Activated CD8-positive, alpha-beta T cell treated with anti-CD3 and anti-CD28 coated beads for 36 hours (primary cell): ENCODE measurements at regions of chr1 and their contacts with region 1.

Region 1: GRCh38 chr1:196063293-196063692 is 544.9 kb downstream of the KCNT2 start:
- DNase-seq: no peak
- ATAC-seq: no peak
- H3K4me3 Mint-ChIP-seq: no peak overlapping the region
- H3K27ac Mint-ChIP-seq: no peak overlapping the region
- H3K4me1 Mint-ChIP-seq: no peaks in the 10 kb centered on the region
- H3K27me3 Mint-ChIP-seq: no peaks in the 10 kb centered on the region
- CTCF ChIP-seq: no peak

Region 2: GRCh38 chr1:195804547-195804946 is 258.7 kb before region 1 on chr1:
- CTCF ChIA-PET with region 1: no interaction called
- POLR2A ChIA-PET with region 1: no interaction called
- intact Hi-C with region 1: no loop called
- DNase-seq: no peak
- ATAC-seq: no peak
- H3K4me3 Mint-ChIP-seq: no peak overlapping the region
- H3K27ac Mint-ChIP-seq: no peak overlapping the region
- H3K4me1 Mint-ChIP-seq: no peaks in the 10 kb centered on the region
- H3K27me3 Mint-ChIP-seq: no peaks in the 10 kb centered on the region
- CTCF ChIP-seq: no peak

Region 3: GRCh38 chr1:196098000-196098399 is 34.7 kb after region 1 on chr1:
- CTCF ChIA-PET with region 1: no interaction called
- POLR2A ChIA-PET with region 1: no interaction called
- intact Hi-C with region 1: loop called (anchors 2 kb)
- DNase-seq: no peak
- ATAC-seq: no peak
- H3K4me3 Mint-ChIP-seq: no peak overlapping the region
- H3K27ac Mint-ChIP-seq: no peak overlapping the region
- H3K4me1 Mint-ChIP-seq: no peaks in the 10 kb centered on the region
- H3K27me3 Mint-ChIP-seq: no peaks in the 10 kb centered on the region
- CTCF ChIP-seq: no peak

Region 4: GRCh38 chr1:196115646-196116045 is 52.4 kb after region 1 on chr1:
- CTCF ChIA-PET with region 1: no interaction called
- POLR2A ChIA-PET with region 1: no interaction called
- intact Hi-C with region 1: loop called (anchors 10 kb)
- DNase-seq: no peak
- ATAC-seq: no peak
- H3K4me3 Mint-ChIP-seq: no peak overlapping the region
- H3K27ac Mint-ChIP-seq: no peak overlapping the region
- H3K4me1 Mint-ChIP-seq: no peaks in the 10 kb centered on the region
- H3K27me3 Mint-ChIP-seq: no peaks in the 10 kb centered on the region
- CTCF ChIP-seq: no peak